ENCODE measurements at regions of chr12 and their contacts with region 1.

Region 1: DNA sequence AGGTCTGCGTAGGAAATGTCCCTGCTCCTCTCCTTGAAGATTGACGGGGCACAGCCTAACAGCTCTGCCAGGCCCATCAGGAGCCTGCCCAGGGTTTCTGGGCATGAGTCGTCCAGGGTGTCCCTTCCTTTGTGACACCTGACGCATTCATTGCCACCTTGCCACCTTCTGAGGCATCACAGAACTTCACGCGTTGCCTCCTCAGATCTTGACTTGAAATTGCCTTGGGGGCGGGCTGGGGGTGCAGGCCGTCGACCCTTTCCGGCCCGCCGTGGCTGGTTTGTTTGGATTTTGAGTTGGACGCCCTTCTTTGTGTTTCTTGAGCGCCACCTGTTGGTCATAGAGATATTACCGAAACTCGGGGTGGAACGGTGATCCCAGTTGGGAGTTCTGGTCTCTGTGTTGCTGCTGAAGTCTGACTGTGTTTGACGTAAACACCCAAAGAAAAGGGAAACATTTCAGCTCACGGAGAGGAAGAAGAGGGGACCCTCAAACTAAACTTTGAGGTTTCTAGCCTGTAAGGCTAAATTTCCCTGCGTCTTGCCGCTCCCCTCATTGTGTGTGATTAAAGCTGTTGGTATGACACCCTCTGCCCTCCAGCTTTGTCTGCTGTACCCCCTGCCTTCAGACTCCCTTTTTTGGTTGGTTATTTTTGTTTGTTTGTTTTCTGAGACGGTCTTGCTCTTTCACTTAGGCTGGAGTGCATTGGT is 44.6 kb downstream of the MLXIP start:
- DNase-seq: peak; percentile 87
- ATAC-seq: peak; percentile 71
- H3K4me3 ChIP-seq: peak overlapping the region; percentile 57
- H3K27ac ChIP-seq: no peak overlapping the region; the same call in 1 of the 2 replicates
- H3K4me1 ChIP-seq: peaks cover 9% of the 10 kb centered on the region; the same call in 1 of the 2 replicates
- H3K27me3 ChIP-seq: no peaks in the 10 kb centered on the region
- CTCF ChIP-seq: peak; percentile 97

Region 2: GRCh38 chr12:122051231-122051876 is 71.9 kb before region 1 on chr12:
- CTCF ChIA-PET with region 1: interaction called, 5 read pairs
- POLR2A ChIA-PET with region 1: no interaction called
- intact Hi-C with region 1: loop called (anchors 1 kb)
- DNase-seq: no peak
- ATAC-seq: no peak
- H3K4me3 ChIP-seq: no peak overlapping the region
- H3K27ac ChIP-seq: no peak overlapping the region
- H3K4me1 ChIP-seq: no peaks in the 10 kb centered on the region
- H3K27me3 ChIP-seq: no peaks in the 10 kb centered on the region
- CTCF ChIP-seq: no peak

Region 3: DNA sequence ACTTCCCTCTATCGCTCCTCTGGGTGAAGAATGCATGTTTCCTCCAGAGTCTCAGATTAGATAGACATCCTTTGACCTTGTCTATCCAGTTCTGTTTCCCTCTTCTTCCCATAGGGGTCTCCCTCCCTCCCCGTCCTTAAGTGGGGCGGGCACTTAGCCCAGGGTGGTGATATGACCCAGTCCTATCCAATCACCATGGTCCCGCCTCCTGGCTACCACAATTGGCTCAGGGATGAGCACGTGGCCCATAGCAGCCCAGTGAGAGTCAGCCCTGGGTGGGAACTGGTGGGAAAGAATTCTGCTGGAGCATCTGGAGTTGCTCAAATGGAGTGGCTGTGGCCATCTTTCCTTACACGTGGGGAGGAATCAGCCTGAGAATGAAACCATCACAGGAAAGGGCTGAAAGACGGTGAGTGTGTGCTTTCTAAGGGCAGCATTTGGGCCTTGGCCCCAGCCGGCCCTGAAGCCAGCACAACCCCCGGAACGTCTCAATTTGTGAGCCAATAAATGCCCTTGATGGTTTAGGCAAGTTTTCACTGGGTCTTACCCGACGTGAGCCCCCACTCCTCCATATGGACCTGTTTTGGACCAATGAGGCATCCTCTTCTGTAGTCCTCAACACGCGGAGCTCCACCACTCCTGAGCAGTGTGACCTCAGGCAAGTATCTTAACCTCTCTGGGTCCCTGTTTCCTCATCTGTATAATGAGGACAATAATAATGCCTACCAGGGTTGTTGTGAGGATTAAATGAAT is 59.0 kb before region 1 on chr12:
- CTCF ChIA-PET with region 1: no interaction called
- POLR2A ChIA-PET with region 1: no interaction called
- intact Hi-C with region 1: loop called (anchors 2 kb)
- DNase-seq: peak; percentile 82
- ATAC-seq: peak; percentile 32
- H3K4me3 ChIP-seq: no peak overlapping the region
- H3K27ac ChIP-seq: peak overlapping the region; percentile 83
- H3K4me1 ChIP-seq: peaks cover 38% of the 10 kb centered on the region
- H3K27me3 ChIP-seq: no peaks in the 10 kb centered on the region
- CTCF ChIP-seq: peak; percentile 57

Region 4: GRCh38 chr12:122078141-122079032 is 44.8 kb before region 1 on chr12 and contains the start of gene MLXIP:
- CTCF ChIA-PET with region 1: interaction called, 5 read pairs
- POLR2A ChIA-PET with region 1: interaction called, 8 read pairs
- intact Hi-C with region 1: loop called (anchors 2 kb)
- DNase-seq: peak; percentile 96
- ATAC-seq: peak; percentile 69
- H3K4me3 ChIP-seq: peak within 1 kb of the TSS; percentile 81
- H3K27ac ChIP-seq: peak within 1 kb of the TSS; percentile 11
- H3K4me1 ChIP-seq: peaks cover 27% of the 10 kb centered on the region
- H3K27me3 ChIP-seq: no peaks in the 10 kb centered on the region
- CTCF ChIP-seq: no peak
- total RNA-seq, gene MLXIP: 16.7 and 21.8 TPM in 2 replicates